H1 (cell line): ENCODE measurements at regions of chr6 and their contacts with region 1.

Region 1: GRCh38 chr6:167285077-167285770 is 5.9 kb upstream of the UNC93A start:
- DNase-seq: no peak
- H3K4me3 ChIP-seq: no peak overlapping the region
- H3K27ac ChIP-seq: no peak overlapping the region
- H3K4me1 ChIP-seq: peaks cover 4 to 16% (median 10%) of the 10 kb centered on the region in 4 experiments; a peak in 5 of 7 replicates
- H3K27me3 ChIP-seq: no peaks in the 10 kb centered on the region; a peak in 2 of 7 replicates
- CTCF ChIP-seq: no peak
- EP300 ChIP-seq: no peak
- POLR2A ChIP-seq: no peak
- RAD21 ChIP-seq: no peak

Region 2: GRCh38 chr6:167031082-167031709 is 254.0 kb before region 1 on chr6:
- CTCF ChIA-PET with region 1: no interaction called
- POLR2A ChIA-PET with region 1: no interaction called
- DNase-seq: no peak
- H3K4me3 ChIP-seq: no peak overlapping the region
- H3K27ac ChIP-seq: no peak overlapping the region
- H3K4me1 ChIP-seq: peaks cover 0 to 5% (median 4%) of the 10 kb centered on the region in 4 experiments; a peak in 2 of 7 replicates
- H3K27me3 ChIP-seq: no peaks in the 10 kb centered on the region
- CTCF ChIP-seq: no peak
- EP300 ChIP-seq: no peak
- POLR2A ChIP-seq: no peak
- RAD21 ChIP-seq: no peak

Region 3: DNA sequence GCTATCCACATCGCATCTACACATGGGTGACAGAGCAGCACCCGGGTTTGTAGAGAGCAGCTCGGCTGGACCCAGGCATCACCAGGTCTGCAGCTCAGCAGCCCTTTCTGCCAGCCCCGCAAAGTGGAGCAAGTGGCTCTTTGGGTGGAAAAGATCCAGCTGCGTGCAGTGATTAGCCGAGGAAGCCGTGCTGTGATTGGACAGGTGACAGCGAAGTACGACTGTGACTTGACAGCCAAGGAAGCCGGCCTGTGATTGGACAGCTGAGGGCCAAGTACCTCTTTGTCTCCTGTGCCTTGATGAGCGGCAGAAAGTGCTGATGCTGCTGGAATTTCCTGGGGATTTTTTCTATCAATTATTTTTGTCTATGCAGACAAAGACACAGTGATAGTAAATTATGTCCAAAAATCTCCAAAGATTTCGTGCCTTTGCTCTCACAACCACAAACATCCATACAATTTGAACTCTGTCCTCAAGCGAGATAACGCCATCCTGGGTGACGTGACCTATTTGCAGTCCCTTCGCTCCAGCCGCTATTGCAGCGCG is 65.2 kb before region 1 on chr6:
- CTCF ChIA-PET with region 1: interaction called, 27 read pairs
- POLR2A ChIA-PET with region 1: interaction called, 7 read pairs
- DNase-seq: no peak
- H3K4me3 ChIP-seq: no peak overlapping the region
- H3K27ac ChIP-seq: no peak overlapping the region
- H3K4me1 ChIP-seq: peaks cover 3 to 22% (median 12%) of the 10 kb centered on the region in 4 experiments; a peak in 6 of 7 replicates
- H3K27me3 ChIP-seq: peaks cover 0 to 3% (median 0%) of the 10 kb centered on the region in 4 experiments; a peak in 3 of 7 replicates
- CTCF ChIP-seq: no peak
- EP300 ChIP-seq: no peak
- POLR2A ChIP-seq: no peak
- RAD21 ChIP-seq: no peak

Region 4: DNA sequence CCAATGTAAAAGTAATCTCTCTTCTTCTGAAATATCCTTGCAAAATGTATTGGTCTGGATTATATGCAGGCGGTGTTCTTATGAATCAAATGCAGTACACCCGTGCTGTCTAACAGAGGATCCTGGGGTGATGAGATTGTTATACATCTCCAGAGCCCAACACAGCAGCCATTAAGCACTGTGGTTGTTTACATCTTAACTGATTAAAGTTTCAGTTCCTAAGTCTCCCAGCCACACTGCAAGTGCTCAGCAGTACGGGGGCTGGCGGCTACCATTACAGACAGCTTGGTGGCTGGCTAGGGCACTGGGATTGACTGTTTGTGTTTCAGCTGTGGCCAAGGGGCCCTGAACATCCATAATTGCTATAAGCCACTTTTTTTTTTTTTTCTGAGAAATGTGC is 12.9 kb after region 1 on chr6:
- CTCF ChIA-PET with region 1: interaction called, 10 read pairs
- POLR2A ChIA-PET with region 1: no interaction called
- DNase-seq: no peak
- H3K4me3 ChIP-seq: no peak overlapping the region
- H3K27ac ChIP-seq: no peak overlapping the region
- H3K4me1 ChIP-seq: peaks cover 0 to 10% (median 2%) of the 10 kb centered on the region in 4 experiments; a peak in 2 of 7 replicates
- H3K27me3 ChIP-seq: no peaks in the 10 kb centered on the region
- CTCF ChIP-seq: no peak
- EP300 ChIP-seq: no peak
- POLR2A ChIP-seq: no peak
- RAD21 ChIP-seq: no peak